Activated CD4-positive, alpha-beta memory T cell treated with anti-CD3 and anti-CD28 coated beads for 36 hours (primary cell): ENCODE measurements at regions of chr7 and their contacts with region 1.

Region 1: DNA sequence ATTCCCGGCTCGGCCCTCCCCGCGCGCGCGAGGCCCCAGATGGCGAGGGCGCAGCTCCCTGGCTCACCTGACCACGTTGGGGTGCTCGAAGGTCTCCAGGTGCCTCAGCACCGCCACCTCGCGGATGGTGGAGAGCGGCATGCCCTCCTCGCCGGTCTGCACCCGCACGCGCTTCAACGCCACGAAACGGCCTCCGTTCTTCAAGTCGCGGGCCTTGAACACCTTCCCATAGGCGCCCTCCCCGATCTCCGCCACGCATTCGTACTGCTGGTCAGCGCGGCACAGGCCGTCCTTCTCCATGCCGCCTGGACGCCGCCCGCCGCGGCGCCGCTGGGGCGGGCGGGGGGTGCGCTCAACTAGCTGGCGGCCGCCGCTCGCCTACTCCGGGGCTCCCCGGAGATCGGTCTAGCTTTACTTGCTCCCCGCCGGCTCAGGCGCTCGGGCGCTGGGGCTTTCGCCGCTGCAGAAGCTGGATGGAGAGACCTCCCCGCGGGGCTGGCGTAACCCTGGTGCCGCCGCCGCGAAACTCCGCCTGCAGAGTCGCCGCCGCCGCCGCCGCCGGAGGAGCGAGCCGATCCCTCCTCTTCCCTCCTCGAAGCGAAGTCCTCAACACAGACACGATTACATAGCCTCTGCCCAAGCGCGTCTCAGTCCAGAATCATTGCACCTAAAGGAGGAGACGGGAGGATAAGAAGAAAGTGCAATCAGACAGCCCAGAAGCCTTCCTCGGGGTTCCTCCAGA is 3.2 kb downstream of the CDK6 start:
- DNase-seq: peak; percentile 94
- H3K4me3 Mint-ChIP-seq: peak overlapping the region; percentile 97
- H3K27ac Mint-ChIP-seq: peak overlapping the region; percentile 98
- H3K4me1 Mint-ChIP-seq: peaks cover 43% of the 10 kb centered on the region
- H3K27me3 Mint-ChIP-seq: no peaks in the 10 kb centered on the region

Region 2: DNA sequence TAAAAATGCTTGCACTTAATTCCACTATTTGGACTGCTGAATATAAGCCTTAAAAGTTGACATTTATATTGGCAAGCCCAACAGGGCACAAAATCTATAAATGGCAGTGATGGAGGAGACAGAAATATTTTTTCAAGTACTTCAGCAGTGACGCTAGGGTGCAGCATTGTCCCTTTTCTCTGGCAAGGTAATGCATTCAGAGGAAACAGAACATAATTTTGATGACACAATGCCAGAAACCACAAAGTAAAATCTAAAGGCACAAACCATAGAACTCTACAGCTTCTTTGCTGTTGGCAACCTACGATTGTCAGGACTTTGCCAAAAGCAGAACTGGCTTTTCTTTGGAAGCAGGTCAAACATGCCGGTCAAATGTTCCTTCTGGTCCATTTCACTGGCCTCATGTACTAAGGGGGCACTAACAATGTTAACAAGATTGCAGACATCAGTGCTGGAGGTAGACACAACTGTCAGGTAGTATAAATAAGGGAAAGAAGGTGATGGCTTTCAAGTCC is 212.1 kb before region 1 on chr7:
- CTCF ChIA-PET with region 1: interaction called, 35 read pairs
- POLR2A ChIA-PET with region 1: interaction called, 14 read pairs
- intact Hi-C with region 1: loop called (anchors 1 kb)
- DNase-seq: peak; percentile 86
- H3K4me3 Mint-ChIP-seq: peak overlapping the region; percentile 49
- H3K27ac Mint-ChIP-seq: peak overlapping the region; percentile 93
- H3K4me1 Mint-ChIP-seq: peaks cover 53% of the 10 kb centered on the region
- H3K27me3 Mint-ChIP-seq: no peaks in the 10 kb centered on the region

Region 3: GRCh38 chr7:92708111-92709042 is 124.8 kb before region 1 on chr7:
- CTCF ChIA-PET with region 1: interaction called, 5 read pairs
- POLR2A ChIA-PET with region 1: interaction called, 8 read pairs
- intact Hi-C with region 1: loop called (anchors 1 kb)
- DNase-seq: no peak
- H3K4me3 Mint-ChIP-seq: no peak overlapping the region
- H3K27ac Mint-ChIP-seq: peak overlapping the region; percentile 88
- H3K4me1 Mint-ChIP-seq: peaks cover 55% of the 10 kb centered on the region
- H3K27me3 Mint-ChIP-seq: no peaks in the 10 kb centered on the region

Region 4: GRCh38 chr7:92797693-92798092 is 35.5 kb before region 1 on chr7:
- CTCF ChIA-PET with region 1: no interaction called
- POLR2A ChIA-PET with region 1: no interaction called
- intact Hi-C with region 1: loop called (anchors 1 kb)
- DNase-seq: peak; percentile 64
- H3K4me3 Mint-ChIP-seq: no peak overlapping the region
- H3K27ac Mint-ChIP-seq: no peak overlapping the region
- H3K4me1 Mint-ChIP-seq: peaks cover 32% of the 10 kb centered on the region
- H3K27me3 Mint-ChIP-seq: no peaks in the 10 kb centered on the region

Region 5: DNA sequence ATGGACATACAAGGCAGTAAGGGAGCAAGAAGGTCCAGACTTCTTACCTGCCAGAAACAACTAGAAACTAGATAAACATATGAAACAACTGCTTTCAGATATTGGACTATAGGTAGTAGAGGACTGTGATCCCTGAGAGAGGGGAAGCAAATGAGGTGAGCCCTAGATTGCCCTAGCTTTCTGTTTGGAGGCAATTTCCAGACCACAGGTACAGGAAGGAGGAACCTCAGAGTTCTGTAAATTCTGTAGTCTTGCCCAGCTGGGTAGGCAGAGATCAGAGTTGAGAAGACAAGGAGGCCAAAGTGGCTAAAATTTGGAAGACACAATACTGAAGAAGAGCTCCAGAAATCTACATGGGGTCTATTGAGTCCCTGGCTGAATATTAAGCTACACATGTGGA is 17.8 kb before region 1 on chr7:
- CTCF ChIA-PET with region 1: interaction called, 32 read pairs
- POLR2A ChIA-PET with region 1: interaction called, 23 read pairs
- intact Hi-C with region 1: loop called (anchors 1 kb)
- DNase-seq: no peak
- H3K4me3 Mint-ChIP-seq: peak overlapping the region; percentile 26
- H3K27ac Mint-ChIP-seq: peak overlapping the region; percentile 74
- H3K4me1 Mint-ChIP-seq: peaks cover 89% of the 10 kb centered on the region
- H3K27me3 Mint-ChIP-seq: no peaks in the 10 kb centered on the region

Region 6: DNA sequence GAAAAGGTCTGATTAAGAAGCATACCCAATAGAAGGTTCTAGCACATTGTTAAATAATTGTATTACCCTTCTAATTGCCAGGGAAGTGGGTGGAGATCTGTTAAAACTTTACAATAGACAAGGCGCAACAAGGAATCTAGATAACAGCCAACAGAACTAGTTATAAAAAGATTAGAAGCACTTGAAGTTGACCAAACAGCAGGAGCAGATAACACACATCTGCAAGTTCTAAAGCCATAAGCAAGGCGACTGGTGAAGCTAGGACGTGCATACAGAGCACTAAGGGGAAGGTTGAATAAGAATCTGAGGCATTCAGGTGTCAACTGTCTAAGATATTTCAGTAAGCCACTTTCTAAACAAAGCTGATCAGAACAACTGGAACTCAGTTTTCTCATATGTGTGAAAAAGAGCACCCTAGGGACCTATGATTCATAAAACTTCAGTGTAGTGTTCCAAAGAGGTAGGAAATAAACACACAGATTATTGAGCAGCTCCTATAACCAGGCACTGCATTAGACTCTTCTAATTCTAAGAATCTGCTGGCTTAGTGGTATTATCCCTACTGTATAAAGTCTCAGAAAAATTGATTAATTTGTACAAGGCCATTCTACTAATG is 173.4 kb after region 1 on chr7:
- CTCF ChIA-PET with region 1: no interaction called
- POLR2A ChIA-PET with region 1: no interaction called
- intact Hi-C with region 1: no loop called
- DNase-seq: no peak
- H3K4me3 Mint-ChIP-seq: no peak overlapping the region
- H3K27ac Mint-ChIP-seq: no peak overlapping the region
- H3K4me1 Mint-ChIP-seq: no peaks in the 10 kb centered on the region
- H3K27me3 Mint-ChIP-seq: peaks cover 17% of the 10 kb centered on the region

Region 7: GRCh38 chr7:93055543-93056107 is 222.4 kb after region 1 on chr7:
- CTCF ChIA-PET with region 1: interaction called, 6 read pairs
- POLR2A ChIA-PET with region 1: no interaction called
- intact Hi-C with region 1: loop called (anchors 1 kb)
- DNase-seq: no peak
- H3K4me3 Mint-ChIP-seq: no peak overlapping the region
- H3K27ac Mint-ChIP-seq: no peak overlapping the region
- H3K4me1 Mint-ChIP-seq: peaks cover 17% of the 10 kb centered on the region
- H3K27me3 Mint-ChIP-seq: peaks cover 6% of the 10 kb centered on the region